ENCODE measurements at regions of chr20 and their contacts with region 1.

Region 1: GRCh38 chr20:19205977-19206396 is 6.5 kb upstream of the SLC24A3 start:
- DNase-seq: peak; percentile 47
- H3K27ac ChIP-seq: no peak overlapping the region
- CTCF ChIP-seq: peak; percentile 96

Region 2: GRCh38 chr20:19583532-19584175 is 377.7 kb after region 1 on chr20:
- CTCF ChIA-PET with region 1: interaction called, 11 read pairs
- POLR2A ChIA-PET with region 1: no interaction called
- DNase-seq: peak; percentile 52
- H3K27ac ChIP-seq: no peak overlapping the region
- CTCF ChIP-seq: peak; percentile 51

Region 3: DNA sequence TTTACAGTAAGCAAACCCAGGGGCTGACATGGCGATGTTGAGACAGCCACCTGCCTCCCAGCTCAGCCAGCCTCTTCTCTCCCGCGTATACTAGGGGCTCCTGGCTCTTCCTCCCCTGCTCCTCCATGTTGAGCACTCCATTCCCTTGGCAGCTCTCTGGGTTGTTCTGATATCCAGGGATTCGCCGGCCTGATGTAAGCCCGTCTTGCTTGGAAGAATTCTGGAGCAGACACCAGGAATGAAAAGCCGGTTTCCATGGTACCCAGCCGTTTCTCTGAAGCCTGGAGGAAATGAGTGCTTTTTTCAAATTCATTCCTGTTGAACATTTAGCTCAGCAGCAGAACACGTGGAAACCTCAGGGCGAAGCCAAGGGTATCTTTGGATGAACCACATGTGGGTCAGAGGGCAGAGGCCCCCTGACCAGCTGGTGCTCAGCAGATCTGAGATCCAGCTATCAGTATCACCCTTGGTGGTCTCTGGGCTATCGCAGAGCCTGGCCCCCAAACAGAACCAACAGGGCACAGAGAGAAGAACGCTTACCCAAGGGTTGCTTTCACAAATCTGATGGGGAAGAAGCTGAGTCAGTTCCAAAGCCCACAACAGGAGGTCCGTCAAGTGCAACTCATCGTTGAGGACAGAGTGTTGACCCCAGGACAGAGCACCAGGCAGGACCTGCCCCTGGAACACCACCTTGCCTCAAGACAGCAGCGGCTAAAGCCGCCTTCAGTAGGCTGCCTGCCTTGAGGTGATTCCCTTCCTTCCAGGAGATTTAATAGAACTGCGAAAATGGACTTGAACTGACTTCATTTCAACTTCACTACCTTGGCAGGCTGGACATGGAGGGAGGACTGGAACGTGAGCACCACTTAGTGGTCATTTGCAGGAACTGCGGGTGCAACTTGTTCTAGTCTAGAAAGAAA is 456.0 kb after region 1 on chr20:
- CTCF ChIA-PET with region 1: interaction called, 20 read pairs
- POLR2A ChIA-PET with region 1: no interaction called
- DNase-seq: peak; percentile 68
- H3K27ac ChIP-seq: no peak overlapping the region
- CTCF ChIP-seq: peak; percentile 100

Measured in RWPE1 (cell line).